Calu3 (cell line): ENCODE measurements at regions of chr4 and their contacts with region 1.

Region 1: GRCh38 chr4:159175085-159175988 is 72.5 kb downstream of the RAPGEF2 start:
- DNase-seq: peak; percentile 64
- H3K4me3 Mint-ChIP-seq: peak overlapping the region; percentile 53
- H3K27ac Mint-ChIP-seq: peak overlapping the region; percentile 37
- H3K4me1 Mint-ChIP-seq: peaks cover 29% of the 10 kb centered on the region
- H3K27me3 Mint-ChIP-seq: no peaks in the 10 kb centered on the region
- CTCF ChIP-seq: peak; percentile 54

Region 2: DNA sequence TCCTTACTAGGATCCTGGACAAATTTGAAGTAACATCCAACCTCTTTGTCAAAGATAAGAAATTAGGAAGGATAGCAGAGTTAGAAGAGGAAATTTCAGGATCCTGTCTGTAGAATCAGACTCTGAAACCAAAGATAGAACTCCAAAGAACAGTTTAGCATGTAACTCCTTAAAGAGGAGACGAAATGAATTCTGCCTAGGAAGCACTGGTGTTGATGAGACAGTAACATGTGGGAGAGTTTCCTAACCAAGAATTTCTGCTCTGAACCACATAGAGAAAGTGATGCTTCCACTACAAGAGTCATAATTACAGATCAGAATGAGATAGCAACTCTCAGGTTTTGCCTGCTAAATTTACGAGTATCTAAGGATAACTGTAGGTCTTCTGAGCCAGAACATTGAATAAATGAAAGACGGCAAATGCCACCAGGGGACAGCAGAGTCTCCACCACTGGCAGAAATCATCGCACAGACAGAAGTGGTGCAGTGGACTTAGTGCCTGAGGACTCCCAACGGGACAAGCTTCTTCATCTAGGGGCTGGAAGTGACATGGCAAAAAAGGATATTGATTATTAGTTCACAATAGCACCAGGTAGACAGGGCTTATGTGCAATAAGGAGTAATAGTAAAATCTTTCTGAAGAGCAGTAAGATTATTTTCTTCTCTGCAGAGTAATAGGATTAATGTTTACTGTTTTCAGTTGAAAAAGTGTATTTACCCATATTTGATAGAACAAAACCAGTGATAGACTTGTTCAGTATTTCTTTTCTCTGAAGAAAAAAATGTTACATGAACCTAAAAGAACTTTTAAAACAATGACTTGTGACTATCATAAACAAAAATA is 445.4 kb before region 1 on chr4:
- CTCF ChIA-PET with region 1: no interaction called
- intact Hi-C with region 1: loop called (anchors 10 kb)
- DNase-seq: peak; percentile 50
- H3K4me3 Mint-ChIP-seq: no peak overlapping the region
- H3K27ac Mint-ChIP-seq: no peak overlapping the region
- H3K4me1 Mint-ChIP-seq: no peaks in the 10 kb centered on the region
- H3K27me3 Mint-ChIP-seq: no peaks in the 10 kb centered on the region
- CTCF ChIP-seq: peak; percentile 39

Region 3: GRCh38 chr4:158856852-158857251 is 318.5 kb before region 1 on chr4:
- CTCF ChIA-PET with region 1: no interaction called
- intact Hi-C with region 1: loop called (anchors 1 kb)
- DNase-seq: no peak
- H3K4me3 Mint-ChIP-seq: no peak overlapping the region
- H3K27ac Mint-ChIP-seq: no peak overlapping the region
- H3K4me1 Mint-ChIP-seq: no peaks in the 10 kb centered on the region
- H3K27me3 Mint-ChIP-seq: no peaks in the 10 kb centered on the region
- CTCF ChIP-seq: no peak

Region 4: DNA sequence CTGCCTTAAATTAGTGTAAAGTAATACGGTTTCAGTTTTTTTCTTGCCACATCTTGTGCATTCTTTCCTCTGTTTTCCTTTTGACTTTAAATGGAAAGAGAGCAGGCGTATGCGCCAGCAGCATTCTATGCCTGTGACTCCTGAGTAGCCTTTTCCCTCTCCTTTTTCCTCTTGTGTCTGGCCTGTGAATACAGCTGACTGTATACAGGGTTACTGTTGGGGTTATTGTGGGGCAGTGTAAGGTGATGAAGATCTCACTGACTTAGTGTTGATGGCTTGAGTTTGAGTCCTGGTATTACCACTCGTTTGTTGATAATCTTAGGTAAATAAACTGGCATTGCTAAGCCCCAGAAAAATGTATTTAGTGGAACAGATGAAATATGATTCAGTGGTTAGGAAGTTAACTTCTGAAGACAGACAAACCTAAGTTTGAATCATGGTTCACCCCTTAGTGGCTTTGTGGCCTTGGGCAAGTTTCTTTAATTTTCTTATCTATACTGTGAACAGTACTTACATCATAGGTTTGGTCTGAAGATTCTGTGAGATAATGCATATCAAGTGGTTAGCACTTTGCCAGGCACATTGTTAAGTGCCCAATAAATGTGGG is 301.4 kb before region 1 on chr4:
- CTCF ChIA-PET with region 1: interaction called, 3 read pairs
- intact Hi-C with region 1: loop called (anchors 5 kb)
- DNase-seq: peak; percentile 2
- H3K4me3 Mint-ChIP-seq: no peak overlapping the region
- H3K27ac Mint-ChIP-seq: no peak overlapping the region
- H3K4me1 Mint-ChIP-seq: peaks cover 10% of the 10 kb centered on the region
- H3K27me3 Mint-ChIP-seq: no peaks in the 10 kb centered on the region
- CTCF ChIP-seq: no peak

Region 5: GRCh38 chr4:158895797-158896576 is 279.4 kb before region 1 on chr4:
- CTCF ChIA-PET with region 1: no interaction called
- intact Hi-C with region 1: loop called (anchors 1 kb)
- DNase-seq: peak; percentile 23
- H3K4me3 Mint-ChIP-seq: no peak overlapping the region
- H3K27ac Mint-ChIP-seq: peak overlapping the region; percentile 36
- H3K4me1 Mint-ChIP-seq: no peaks in the 10 kb centered on the region
- H3K27me3 Mint-ChIP-seq: no peaks in the 10 kb centered on the region
- CTCF ChIP-seq: no peak

Region 6: DNA sequence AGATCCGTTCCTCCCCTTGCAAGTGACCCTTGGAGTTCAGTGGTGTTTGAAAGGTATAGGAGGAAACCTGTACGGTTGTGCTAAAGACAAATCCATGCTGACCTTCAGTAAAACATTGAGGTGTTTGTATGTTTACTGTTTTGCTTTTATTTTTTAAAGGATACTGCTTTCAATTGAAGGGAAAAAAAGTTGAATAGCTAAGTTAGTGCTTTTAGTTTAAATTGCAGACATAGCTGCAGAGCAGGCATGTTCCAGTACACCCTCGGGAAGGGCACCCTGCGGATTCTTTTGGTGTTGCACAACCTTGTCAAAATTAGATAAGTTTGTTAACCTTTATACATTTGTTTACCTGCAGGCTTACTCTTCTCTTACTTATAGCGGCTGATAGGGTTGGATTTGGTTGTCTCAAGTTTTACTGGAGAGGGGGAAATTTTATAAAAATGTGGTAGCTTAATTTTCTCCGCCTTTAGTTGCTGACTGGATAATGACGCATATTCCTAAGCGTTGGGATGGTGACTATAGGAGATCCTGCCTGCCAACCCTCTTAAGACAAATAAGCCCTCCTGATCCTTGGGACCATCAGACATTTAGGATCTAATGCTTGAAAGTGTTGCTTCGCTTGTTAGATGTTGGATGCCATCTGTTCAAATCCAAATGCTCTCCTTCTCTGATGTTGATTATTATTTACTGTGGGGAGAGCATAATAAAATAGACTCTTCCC is 70.5 kb before region 1 on chr4:
- CTCF ChIA-PET with region 1: no interaction called
- intact Hi-C with region 1: loop called (anchors 1 kb)
- DNase-seq: no peak
- H3K4me3 Mint-ChIP-seq: peak overlapping the region; percentile 90
- H3K27ac Mint-ChIP-seq: peak overlapping the region; percentile 90
- H3K4me1 Mint-ChIP-seq: peaks cover 27% of the 10 kb centered on the region
- H3K27me3 Mint-ChIP-seq: no peaks in the 10 kb centered on the region
- CTCF ChIP-seq: no peak